Ascending aorta (tissue), 2 donors: ENCODE measurements at regions of chr10 and their contacts with region 1.

Region 1: DNA sequence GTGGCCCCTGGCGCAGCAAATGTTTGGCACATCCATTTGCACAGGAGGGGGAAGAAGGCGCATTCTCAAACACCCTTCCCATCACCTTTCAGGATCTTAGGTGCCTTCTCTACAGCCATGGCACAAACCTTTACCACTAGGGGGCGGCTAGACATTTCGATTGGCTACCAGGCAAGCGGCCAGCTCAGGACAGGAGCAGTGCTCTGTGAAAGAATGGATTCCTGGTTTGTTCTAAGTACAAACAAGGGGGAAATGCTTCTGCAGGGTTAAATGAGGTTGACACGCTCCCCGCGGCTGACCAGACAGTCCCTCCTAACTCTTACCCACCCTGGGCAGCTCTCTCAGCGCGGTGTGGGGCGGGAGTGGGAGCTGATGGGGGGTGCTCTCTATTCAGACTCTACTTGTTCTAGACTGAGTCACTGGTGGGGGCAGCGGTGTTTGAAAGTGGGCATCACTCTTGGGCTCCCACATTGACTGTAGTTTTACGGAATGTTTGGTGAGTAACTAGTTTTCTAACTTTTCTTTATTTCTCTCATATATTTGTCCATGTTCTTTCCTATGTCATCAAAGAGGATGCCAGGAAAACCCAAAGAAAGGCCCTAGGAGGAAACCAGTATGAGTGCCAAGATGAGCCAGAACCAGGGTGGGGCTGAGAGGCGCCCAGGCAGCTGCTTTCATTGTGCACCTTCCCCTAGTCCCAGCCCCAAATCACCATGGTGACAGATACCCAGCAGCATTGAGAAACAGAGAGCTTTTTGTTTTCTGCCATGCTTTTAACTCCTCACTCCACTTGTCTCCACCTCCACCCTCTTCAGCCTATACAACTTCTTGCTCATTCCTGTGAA is 61.4 kb upstream of the GPR158 start:
- DNase-seq: peak in 1 of 2 donors; percentile 67
- H3K4me3 ChIP-seq: peak overlapping the region in 1 of 2 donors; percentile 28
- H3K27ac ChIP-seq: no peak overlapping the region
- H3K4me1 ChIP-seq: no peaks in the 10 kb centered on the region
- H3K27me3 ChIP-seq: no peaks in the 10 kb centered on the region
- CTCF ChIP-seq: peak; percentile 9 to 66 (median 56)

Region 2: DNA sequence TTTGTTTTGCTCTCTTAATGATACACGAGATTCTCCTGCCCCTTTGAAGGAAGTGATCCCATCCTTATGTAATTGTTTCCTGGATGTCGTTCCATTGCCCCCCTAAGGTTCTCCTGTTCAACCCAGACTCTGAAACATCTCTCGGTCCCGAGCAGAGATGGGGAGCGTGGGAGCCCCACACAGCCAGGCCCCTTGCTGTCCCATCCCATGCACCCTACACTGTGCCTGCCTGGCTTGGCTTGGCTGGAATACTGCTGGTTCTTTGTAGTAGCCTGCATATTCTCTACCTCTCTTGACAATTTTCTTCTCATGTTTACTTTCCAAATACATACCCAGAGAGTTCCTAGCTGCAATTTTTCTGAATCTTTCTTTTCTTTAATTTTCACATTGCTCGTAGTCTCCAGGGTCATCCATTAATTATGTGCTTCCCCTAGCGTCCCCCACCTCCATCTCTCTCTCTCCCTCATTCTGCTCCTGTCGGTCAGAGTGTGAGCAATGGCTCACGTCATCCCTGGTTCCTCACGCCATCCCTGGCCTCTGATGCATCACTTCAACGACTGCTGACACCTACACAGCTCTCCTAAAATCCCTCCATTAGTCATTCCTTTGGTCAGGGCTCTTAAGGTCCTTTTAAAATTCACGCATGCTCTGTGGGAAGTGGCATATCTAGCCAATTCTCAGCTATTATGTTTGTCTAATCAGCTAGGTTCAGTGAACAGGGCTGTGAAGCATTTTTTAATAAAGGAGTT is 28.9 kb after region 1 on chr10:
- intact Hi-C with region 1: no loop called
- DNase-seq: no peak
- H3K4me3 ChIP-seq: no peak overlapping the region
- H3K27ac ChIP-seq: no peak overlapping the region
- H3K4me1 ChIP-seq: no peaks in the 10 kb centered on the region
- H3K27me3 ChIP-seq: no peaks in the 10 kb centered on the region
- CTCF ChIP-seq: no peak

Region 3: DNA sequence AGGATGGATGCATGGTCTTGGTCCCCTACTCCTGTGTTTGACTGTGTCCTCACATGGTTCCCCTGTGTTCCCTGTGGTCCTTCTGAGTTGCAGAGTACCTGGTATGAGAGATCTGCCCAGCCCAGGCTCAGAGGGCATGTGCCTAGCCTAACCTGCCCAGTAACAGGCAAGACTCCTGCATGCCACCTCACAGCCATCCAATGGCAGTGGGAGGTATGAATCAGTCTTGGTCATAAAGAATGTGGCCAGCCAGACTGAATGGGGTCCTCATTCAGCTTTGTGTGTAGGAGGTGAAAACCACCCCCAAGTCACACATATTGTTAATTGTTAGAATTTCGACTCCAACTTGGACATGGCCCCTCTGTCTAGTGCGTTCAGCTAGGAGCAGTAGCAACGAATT is 44.2 kb after region 1 on chr10:
- intact Hi-C with region 1: no loop called
- DNase-seq: no peak
- H3K4me3 ChIP-seq: no peak overlapping the region
- H3K27ac ChIP-seq: no peak overlapping the region
- H3K4me1 ChIP-seq: no peaks in the 10 kb centered on the region
- H3K27me3 ChIP-seq: no peaks in the 10 kb centered on the region
- CTCF ChIP-seq: no peak

Region 4: DNA sequence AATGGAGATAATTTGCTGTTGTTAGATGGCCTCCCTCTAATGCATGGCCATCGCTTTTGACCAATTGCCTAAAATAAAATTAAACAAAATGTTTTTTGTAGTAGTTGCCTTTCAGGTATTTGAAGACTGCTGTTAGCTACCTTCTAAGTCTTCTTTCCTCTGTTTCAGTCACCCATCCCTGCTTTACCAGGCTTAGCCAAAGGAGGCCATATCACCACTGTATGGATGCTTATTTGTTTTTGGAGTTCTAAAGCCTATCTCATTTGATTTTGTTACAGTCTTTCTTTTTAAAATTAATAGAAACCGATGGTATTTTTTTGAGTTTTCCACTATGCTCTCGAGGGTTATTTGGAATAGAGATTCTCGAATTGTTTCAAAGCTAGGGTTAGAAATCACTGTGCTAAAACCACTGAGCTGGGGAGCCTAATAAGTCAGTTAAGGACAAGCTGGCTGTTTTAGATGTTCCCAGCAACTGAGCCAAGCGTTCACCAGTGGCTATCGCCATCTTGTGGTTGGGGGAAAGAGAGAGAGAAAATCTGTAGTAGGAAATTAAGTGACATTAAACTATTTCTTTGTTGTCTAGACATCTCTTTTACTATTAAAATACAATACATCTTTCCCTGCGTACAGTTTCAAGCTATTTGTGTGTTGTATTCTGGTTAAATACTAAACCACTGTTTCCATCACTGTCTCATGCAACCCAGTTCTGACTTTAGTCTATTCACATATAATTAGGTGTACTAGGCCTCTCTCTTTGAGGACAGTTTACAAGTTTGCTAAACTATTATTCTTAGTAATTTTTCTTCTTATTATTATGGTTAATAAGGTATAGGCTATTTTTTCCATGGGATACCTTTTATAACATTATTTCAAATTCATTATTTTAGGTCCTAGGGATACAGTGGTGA is 113.6 kb after region 1 on chr10:
- intact Hi-C with region 1: loop called (anchors 5 kb)
- DNase-seq: no peak
- H3K4me3 ChIP-seq: no peak overlapping the region
- H3K27ac ChIP-seq: no peak overlapping the region
- H3K4me1 ChIP-seq: no peaks in the 10 kb centered on the region
- H3K27me3 ChIP-seq: no peaks in the 10 kb centered on the region
- CTCF ChIP-seq: peak in 2 of 3 experiments; percentile 43 to 57